ENCODE measurements at regions of chr6 and their contacts with region 1.

Region 1: DNA sequence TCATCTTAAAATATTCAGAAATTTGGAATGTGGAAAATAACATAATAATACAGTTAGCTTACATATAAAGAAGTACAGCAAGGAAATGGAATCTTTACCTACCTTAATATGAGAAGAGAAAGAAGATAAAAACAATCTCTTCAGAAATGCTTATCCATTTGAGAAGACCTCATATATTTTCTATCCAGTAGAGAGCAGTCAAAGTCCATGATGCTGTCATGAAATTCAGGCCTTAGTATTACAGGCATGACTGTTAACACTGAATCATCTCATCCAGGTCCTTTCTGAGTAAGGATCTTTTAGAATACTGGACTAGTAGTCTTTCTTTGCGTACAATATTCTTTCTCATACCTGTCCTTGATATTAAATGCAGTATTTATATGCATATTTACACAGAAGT is 713.4 kb downstream of the CD109 start:
- ATAC-seq: peak in 7 of 8 experiments; percentile 42 to 86 (median 64)
- H3K4me3 ChIP-seq: no peak overlapping the region
- H3K27ac ChIP-seq: no peak overlapping the region
- H3K4me1 ChIP-seq: no peaks in the 10 kb centered on the region

Region 2: DNA sequence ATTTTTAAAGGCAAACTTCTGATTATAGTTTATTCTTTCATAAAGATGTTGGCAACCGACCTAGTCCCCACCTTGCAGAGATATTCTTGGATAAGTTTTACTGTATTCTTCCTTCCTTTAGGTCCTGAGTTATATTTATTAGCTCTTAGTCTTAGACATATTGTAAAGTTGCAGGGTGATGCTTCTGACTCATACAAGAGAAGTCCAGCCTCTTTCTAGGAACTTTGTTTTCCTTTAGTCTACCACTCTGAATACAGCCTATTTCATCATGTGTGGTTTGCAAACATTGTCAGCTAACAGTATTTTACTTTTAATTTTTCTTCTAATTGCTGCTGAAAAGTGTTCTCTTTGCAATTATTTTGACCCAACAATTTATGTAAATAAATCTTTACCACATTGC is 109.7 kb after region 1 on chr6:
- in situ Hi-C with region 1: no loop called
- ATAC-seq: peak in 3 of 8 experiments; percentile 56 to 84 (median 79)
- H3K4me3 ChIP-seq: no peak overlapping the region
- H3K27ac ChIP-seq: no peak overlapping the region
- H3K4me1 ChIP-seq: no peaks in the 10 kb centered on the region

Region 3: GRCh38 chr6:74574794-74575193 is 165.3 kb after region 1 on chr6:
- in situ Hi-C with region 1: loop called in 1 of 9 experiments (anchors 25 kb)
- ATAC-seq: peak in 3 of 8 experiments; percentile 37 to 43 (median 41)
- H3K4me3 ChIP-seq: no peak overlapping the region
- H3K27ac ChIP-seq: no peak overlapping the region
- H3K4me1 ChIP-seq: no peaks in the 10 kb centered on the region

Region 4: GRCh38 chr6:75183099-75183541 is 773.7 kb after region 1 on chr6:
- in situ Hi-C with region 1: loop called in 1 of 9 experiments (anchors 25 kb)
- ATAC-seq: peak in 1 of 8 experiments; percentile 55
- H3K4me3 ChIP-seq: no peak overlapping the region
- H3K27ac ChIP-seq: no peak overlapping the region
- H3K4me1 ChIP-seq: no peaks in the 10 kb centered on the region